B cell (primary cell): ENCODE measurements at regions of chr11 and their contacts with region 1.

Region 1: DNA sequence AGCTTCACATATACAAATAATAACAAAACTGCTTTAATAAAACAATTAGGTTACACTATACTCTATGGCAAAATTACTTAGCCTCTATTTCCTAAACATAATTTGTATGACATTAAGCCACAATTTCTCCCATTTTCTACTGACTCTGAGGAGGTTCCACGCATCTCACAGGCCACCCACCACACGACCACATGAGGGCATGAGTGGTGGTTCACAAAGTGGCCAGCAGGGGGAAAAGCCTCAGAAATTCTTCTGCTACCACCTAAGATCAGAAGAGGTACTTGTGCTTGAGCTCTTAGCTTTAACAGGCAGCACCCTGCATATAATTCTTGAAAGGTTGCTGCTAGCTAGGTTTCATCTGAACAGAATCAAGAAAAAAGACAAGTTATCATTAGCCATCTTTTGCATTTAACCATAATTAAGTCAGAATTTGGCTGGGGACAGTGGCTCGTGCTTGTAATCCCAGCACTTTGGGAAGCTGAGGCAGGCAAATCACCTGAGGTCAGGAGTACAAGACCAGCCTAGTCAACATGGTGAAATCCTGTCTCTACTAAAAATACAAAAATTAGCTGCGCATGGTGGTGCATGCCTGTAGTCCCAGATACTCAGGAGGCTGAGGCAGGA is 7.7 kb downstream of the LPXN start:
- DNase-seq: peak; percentile 87
- ATAC-seq: peak; percentile 98
- H3K4me3 ChIP-seq: no peak overlapping the region
- H3K4me3 Mint-ChIP-seq: peak overlapping the region; percentile 1
- H3K27ac ChIP-seq: no peak overlapping the region
- H3K27ac Mint-ChIP-seq: peak overlapping the region; percentile 5
- H3K4me1 ChIP-seq: peaks cover 19 to 21% of the 10 kb centered on the region in 2 donors
- H3K4me1 Mint-ChIP-seq: peaks cover 42% of the 10 kb centered on the region
- H3K27me3 ChIP-seq: no peaks in the 10 kb centered on the region
- H3K27me3 Mint-ChIP-seq: no peaks in the 10 kb centered on the region
- CTCF ChIP-seq: peak; percentile 82

Region 2: GRCh38 chr11:58524232-58525036 is 43.6 kb before region 1 on chr11:
- CTCF ChIA-PET with region 1: interaction called, 20 read pairs
- POLR2A ChIA-PET with region 1: no interaction called
- intact Hi-C with region 1: no loop called
- DNase-seq: peak; percentile 79
- ATAC-seq: peak; percentile 31
- H3K4me3 ChIP-seq: peak overlapping the region; percentile 22 to 70 (median 45)
- H3K4me3 Mint-ChIP-seq: peak overlapping the region; percentile 84
- H3K27ac ChIP-seq: peak overlapping the region; percentile 81 to 99
- H3K27ac Mint-ChIP-seq: peak overlapping the region; percentile 93
- H3K4me1 ChIP-seq: peaks cover 28 to 32% of the 10 kb centered on the region in 2 donors
- H3K4me1 Mint-ChIP-seq: peaks cover 29% of the 10 kb centered on the region
- H3K27me3 ChIP-seq: no peaks in the 10 kb centered on the region
- H3K27me3 Mint-ChIP-seq: no peaks in the 10 kb centered on the region
- CTCF ChIP-seq: peak; percentile 86

Region 3: GRCh38 chr11:58586998-58587397 is 19.0 kb after region 1 on chr11:
- CTCF ChIA-PET with region 1: interaction called, 102 read pairs
- POLR2A ChIA-PET with region 1: no interaction called
- intact Hi-C with region 1: no loop called
- DNase-seq: no peak
- ATAC-seq: no peak
- H3K4me3 ChIP-seq: no peak overlapping the region
- H3K4me3 Mint-ChIP-seq: peak overlapping the region; percentile 67
- H3K27ac ChIP-seq: peak overlapping the region in 1 of 2 donors; percentile 8
- H3K27ac Mint-ChIP-seq: peak overlapping the region; percentile 82
- H3K4me1 ChIP-seq: peaks cover 9 to 21% of the 10 kb centered on the region in 2 donors
- H3K4me1 Mint-ChIP-seq: peaks cover 51% of the 10 kb centered on the region
- H3K27me3 ChIP-seq: no peaks in the 10 kb centered on the region
- H3K27me3 Mint-ChIP-seq: no peaks in the 10 kb centered on the region
- CTCF ChIP-seq: no peak

Region 4: DNA sequence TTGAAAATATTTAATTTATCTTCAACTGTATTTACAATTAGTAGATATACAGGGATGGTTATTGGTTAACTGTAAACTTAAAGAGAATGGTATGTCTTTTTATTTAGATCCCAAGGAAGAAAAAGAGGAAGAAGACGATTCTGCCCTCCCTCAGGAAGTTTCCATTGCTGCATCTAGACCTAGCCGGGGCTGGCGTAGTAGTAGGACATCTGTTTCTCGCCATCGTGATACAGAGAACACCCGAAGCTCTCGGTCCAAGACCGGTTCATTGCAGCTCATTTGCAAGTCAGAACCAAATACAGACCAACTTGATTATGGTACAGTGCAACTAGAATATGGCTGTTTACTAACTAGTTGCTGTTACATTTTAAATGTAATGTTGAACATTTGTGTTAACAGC is 41.7 kb after region 1 on chr11:
- CTCF ChIA-PET with region 1: interaction called, 22 read pairs
- POLR2A ChIA-PET with region 1: no interaction called
- intact Hi-C with region 1: no loop called
- DNase-seq: peak; percentile 25
- ATAC-seq: peak; percentile 47
- H3K4me3 ChIP-seq: no peak overlapping the region
- H3K4me3 Mint-ChIP-seq: peak overlapping the region; percentile 26
- H3K27ac ChIP-seq: peak overlapping the region in 1 of 2 donors; percentile 18
- H3K27ac Mint-ChIP-seq: peak overlapping the region; percentile 33
- H3K4me1 ChIP-seq: peaks cover 11 to 20% of the 10 kb centered on the region in 2 donors
- H3K4me1 Mint-ChIP-seq: peaks cover 38% of the 10 kb centered on the region
- H3K27me3 ChIP-seq: no peaks in the 10 kb centered on the region
- H3K27me3 Mint-ChIP-seq: no peaks in the 10 kb centered on the region
- CTCF ChIP-seq: no peak

Region 5: GRCh38 chr11:58629857-58630256 is 61.9 kb after region 1 on chr11:
- CTCF ChIA-PET with region 1: interaction called, 81 read pairs
- POLR2A ChIA-PET with region 1: interaction called, 4 read pairs
- intact Hi-C with region 1: loop called (anchors 1 kb)
- DNase-seq: peak; percentile 50
- ATAC-seq: no peak
- H3K4me3 ChIP-seq: no peak overlapping the region
- H3K4me3 Mint-ChIP-seq: no peak overlapping the region
- H3K27ac ChIP-seq: no peak overlapping the region
- H3K27ac Mint-ChIP-seq: peak overlapping the region; percentile 8
- H3K4me1 ChIP-seq: peaks cover 3 to 5% of the 10 kb centered on the region in 2 donors
- H3K4me1 Mint-ChIP-seq: peaks cover 21% of the 10 kb centered on the region
- H3K27me3 ChIP-seq: no peaks in the 10 kb centered on the region
- H3K27me3 Mint-ChIP-seq: no peaks in the 10 kb centered on the region
- CTCF ChIP-seq: peak; percentile 47